ENCODE measurements at regions of chr1 and their contacts with region 1.

Region 1: GRCh38 chr1:39720094-39720999 is 18.3 kb upstream of the PPIE start:
- DNase-seq: no peak
- H3K4me3 Mint-ChIP-seq: no peak overlapping the region
- H3K27ac Mint-ChIP-seq: no peak overlapping the region
- H3K4me1 Mint-ChIP-seq: no peaks in the 10 kb centered on the region
- H3K27me3 Mint-ChIP-seq: peaks cover 50% of the 10 kb centered on the region

Region 2: GRCh38 chr1:39672551-39672947 is 47.8 kb before region 1 on chr1:
- intact Hi-C with region 1: loop called (anchors 2 kb)
- DNase-seq: no peak
- H3K4me3 Mint-ChIP-seq: peak overlapping the region; percentile 60
- H3K27ac Mint-ChIP-seq: no peak overlapping the region
- H3K4me1 Mint-ChIP-seq: peaks cover 8% of the 10 kb centered on the region
- H3K27me3 Mint-ChIP-seq: peaks cover 28% of the 10 kb centered on the region

Measured in activated T-helper 2 cell treated with anti-CD3 and anti-CD28 coated beads, Interferon-gamma antibody, Interleukin-2, Interleukin-4, amounts not matched to agents 10 μg/mL and 5 μg/mL and 100 μg/mL, durations not matched to agents 14 hours and 24 hours and 36 hours (primary cell).